Endothelial cell of umbilical vein (primary cell): ENCODE measurements at regions of chr10 and their contacts with region 1.

Region 1: DNA sequence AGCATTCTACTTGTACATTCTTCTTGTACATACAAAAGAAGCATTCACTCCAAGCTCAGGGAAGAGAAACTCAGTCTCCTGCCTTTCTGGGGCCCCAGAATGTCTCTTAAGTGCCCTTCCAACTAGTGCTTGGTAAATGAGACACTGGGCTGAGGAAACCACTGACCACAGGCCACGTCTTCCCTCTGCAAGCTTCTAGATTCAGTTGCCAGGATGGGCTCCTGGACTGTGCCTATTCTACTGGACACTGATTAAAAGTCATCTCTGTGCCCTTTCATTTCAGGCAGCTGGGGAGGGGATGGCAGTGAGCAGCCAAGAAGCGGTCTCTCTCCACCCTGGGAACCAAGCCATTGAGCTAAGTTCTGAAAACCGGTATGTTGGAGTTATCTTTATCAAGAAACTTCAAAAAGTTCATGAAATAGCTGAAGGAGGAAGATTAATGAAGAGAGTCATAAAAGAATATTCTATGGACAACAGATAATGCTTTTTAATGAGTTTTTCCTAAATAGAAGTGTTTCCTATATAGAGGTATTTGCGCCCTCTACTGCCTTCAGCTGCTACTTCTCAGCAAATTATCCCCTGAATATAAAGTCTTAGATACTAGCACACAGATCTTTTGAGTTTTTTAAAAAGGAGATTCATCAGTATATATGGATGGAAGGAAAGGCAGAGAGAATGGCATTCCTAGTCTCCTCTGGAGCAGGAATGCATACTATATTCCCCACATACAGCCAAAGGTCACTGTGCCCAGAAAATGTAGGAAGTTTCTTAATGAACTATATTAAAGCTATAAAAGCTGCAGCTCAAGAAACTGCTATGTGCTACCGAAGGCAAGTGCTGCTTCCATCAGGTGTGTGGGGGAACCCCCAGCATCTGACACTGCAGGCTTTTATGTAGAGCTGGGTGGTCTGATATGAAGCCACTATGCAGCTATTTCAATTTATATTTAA is 8.4 kb upstream of the IFIT1B start:
- DNase-seq: peak; percentile 61
- H3K4me3 ChIP-seq: no peak overlapping the region
- H3K27ac ChIP-seq: no peak overlapping the region
- H3K4me1 ChIP-seq: peaks cover 6% of the 10 kb centered on the region
- H3K27me3 ChIP-seq: peaks cover 4 to 8% of the 10 kb centered on the region in 2 experiments
- CTCF ChIP-seq: peak; percentile 43 to 52
- POLR2A ChIP-seq: no peak

Region 2: DNA sequence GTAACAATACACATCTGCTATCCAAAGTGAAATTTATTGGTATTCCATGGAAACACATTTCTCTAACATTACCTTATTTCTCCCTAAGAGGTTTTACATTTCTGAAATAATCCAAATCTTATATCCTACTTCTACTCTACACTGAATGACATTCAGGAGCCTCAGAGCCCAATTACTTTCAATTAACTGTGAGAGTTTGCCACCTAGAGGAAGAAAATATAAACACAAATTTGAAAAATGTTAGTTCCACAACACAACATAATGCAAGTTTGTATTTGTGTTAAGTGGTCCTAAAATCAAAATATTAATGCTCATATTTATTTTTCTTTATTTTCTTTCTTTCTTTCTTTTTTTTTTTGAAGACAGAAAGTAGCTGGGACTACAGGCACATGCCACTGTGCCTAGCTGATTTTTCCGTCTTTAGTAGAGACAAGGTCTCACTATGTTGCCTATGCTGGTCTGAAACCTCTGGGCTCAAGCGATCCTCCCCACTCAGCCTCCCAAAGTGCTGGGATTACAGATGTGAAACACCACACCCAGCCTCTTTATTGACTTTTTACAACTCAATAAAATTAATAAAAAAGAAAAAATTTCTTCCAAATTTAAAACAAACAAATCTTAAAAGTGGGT is 1597.4 kb before region 1 on chr10:
- CTCF ChIA-PET with region 1: no interaction called
- POLR2A ChIA-PET with region 1: no interaction called
- dilution Hi-C with region 1: no loop called
- intact Hi-C with region 1: no loop called
- DNase-seq: peak; percentile 57
- H3K4me3 ChIP-seq: no peak overlapping the region
- H3K27ac ChIP-seq: no peak overlapping the region
- H3K4me1 ChIP-seq: peaks cover 17% of the 10 kb centered on the region
- H3K27me3 ChIP-seq: no peaks in the 10 kb centered on the region
- CTCF ChIP-seq: peak; percentile 21 to 35
- POLR2A ChIP-seq: no peak

Region 3: GRCh38 chr10:89266721-89267453 is 102.5 kb before region 1 on chr10:
- CTCF ChIA-PET with region 1: interaction called, 12 read pairs
- POLR2A ChIA-PET with region 1: no interaction called
- dilution Hi-C with region 1: no loop called
- intact Hi-C with region 1: no loop called
- DNase-seq: no peak
- H3K4me3 ChIP-seq: no peak overlapping the region
- H3K27ac ChIP-seq: no peak overlapping the region
- H3K4me1 ChIP-seq: no peaks in the 10 kb centered on the region
- H3K27me3 ChIP-seq: peaks cover 69 to 76% of the 10 kb centered on the region in 2 experiments
- CTCF ChIP-seq: no peak
- POLR2A ChIP-seq: no peak

Region 4: GRCh38 chr10:89283936-89284475 is 85.4 kb before region 1 on chr10:
- CTCF ChIA-PET with region 1: interaction called, 31 read pairs
- POLR2A ChIA-PET with region 1: no interaction called
- dilution Hi-C with region 1: no loop called
- intact Hi-C with region 1: loop called (anchors 1 kb)
- DNase-seq: peak; percentile 44
- H3K4me3 ChIP-seq: no peak overlapping the region
- H3K27ac ChIP-seq: no peak overlapping the region
- H3K4me1 ChIP-seq: peaks cover 15% of the 10 kb centered on the region
- H3K27me3 ChIP-seq: peaks cover 41 to 62% of the 10 kb centered on the region in 2 experiments
- CTCF ChIP-seq: no peak
- POLR2A ChIP-seq: no peak

Region 5: GRCh38 chr10:89327784-89328441 is 41.5 kb before region 1 on chr10 and contains the start of gene IFIT3:
- CTCF ChIA-PET with region 1: interaction called, 7 read pairs
- POLR2A ChIA-PET with region 1: no interaction called
- dilution Hi-C with region 1: no loop called
- intact Hi-C with region 1: loop called (anchors 1 kb)
- DNase-seq: peak; percentile 95
- H3K4me3 ChIP-seq: peak within 1 kb of the TSS; percentile 24 to 80 (median 39)
- H3K27ac ChIP-seq: peak within 1 kb of the TSS; percentile 88
- H3K4me1 ChIP-seq: peaks cover 21% of the 10 kb centered on the region
- H3K27me3 ChIP-seq: no peaks in the 10 kb centered on the region
- CTCF ChIP-seq: no peak
- POLR2A ChIP-seq: peak; percentile 19
- total RNA-seq, gene IFIT3: 2.6 and 3.1 TPM in 2 replicates

Region 6: DNA sequence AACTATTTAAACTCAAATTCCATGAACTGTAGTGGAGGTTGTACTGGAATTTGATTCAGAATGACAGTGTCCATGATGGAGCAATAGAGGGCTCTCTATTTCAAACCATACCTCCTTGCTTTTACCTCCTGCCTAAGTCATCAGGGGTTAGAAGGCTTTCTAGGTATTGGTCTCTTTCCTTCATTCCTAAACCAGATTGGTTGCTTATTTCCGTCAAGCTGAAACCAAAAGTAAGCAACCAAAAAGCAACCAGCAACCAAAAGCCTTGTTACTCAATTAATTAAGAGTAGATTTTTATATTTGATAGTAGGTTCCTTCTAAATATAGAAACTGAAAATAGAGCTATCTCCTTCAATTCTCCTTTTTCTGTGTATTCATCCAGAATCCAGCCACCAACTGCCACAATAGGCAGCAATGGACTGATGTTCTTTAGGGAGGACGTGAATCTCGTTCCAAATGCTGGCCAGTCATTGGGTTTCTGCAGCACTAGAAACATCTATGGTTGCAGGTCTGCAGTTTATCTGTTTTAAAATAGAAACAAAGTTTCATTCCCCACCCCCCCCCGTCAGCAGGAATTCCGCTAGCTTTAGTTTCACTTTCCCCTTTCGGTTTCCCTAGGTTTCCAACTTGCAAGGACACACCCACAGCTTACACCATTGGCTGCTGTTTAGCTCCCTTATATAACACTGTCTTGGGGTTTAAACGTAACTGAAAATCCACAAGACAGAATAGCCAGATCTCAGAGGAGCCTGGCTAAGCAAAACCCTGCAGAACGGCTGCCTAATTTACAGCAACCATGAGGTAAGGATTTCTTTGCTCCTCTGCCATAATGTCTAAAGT is 22.7 kb after region 1 on chr10 and contains the start of gene IFIT1:
- CTCF ChIA-PET with region 1: interaction called, 21 read pairs
- POLR2A ChIA-PET with region 1: no interaction called
- dilution Hi-C with region 1: no loop called
- intact Hi-C with region 1: no loop called
- DNase-seq: peak; percentile 76
- H3K4me3 ChIP-seq: peak within 1 kb of the TSS; percentile 52 to 100 (median 98)
- H3K27ac ChIP-seq: peak within 1 kb of the TSS; percentile 63
- H3K4me1 ChIP-seq: peaks cover 10% of the 10 kb centered on the region
- H3K27me3 ChIP-seq: no peaks in the 10 kb centered on the region
- CTCF ChIP-seq: no peak
- POLR2A ChIP-seq: no peak
- total RNA-seq, gene IFIT1: 0.39 and 0.75 TPM in 2 replicates